ENCODE measurements at regions of chr17 and their contacts with region 1.

Region 1: GRCh38 chr17:8118769-8119580 is 661 bp upstream of the ALOXE3 start:
- DNase-seq: peak; percentile 90 to 95 (median 92)
- H3K4me3 ChIP-seq: peak overlapping the region; percentile 39 to 88 (median 75)
- H3K27ac ChIP-seq: peak overlapping the region; percentile 64 to 98 (median 92)
- H3K27me3 ChIP-seq: peaks cover 0 to 3% (median 0%) of the 10 kb centered on the region in 45 donors
- CTCF ChIP-seq: peak; percentile 78 to 98 (median 92)

Region 2: GRCh38 chr17:8057691-8058114 is 61.3 kb before region 1 on chr17:
- intact Hi-C with region 1: loop called in 1 of 2 experiments (anchors 5 kb)
- DNase-seq: peak in 7 of 10 donors; percentile 25 to 58 (median 48)
- H3K4me3 ChIP-seq: peak overlapping the region in 4 of 59 donors; percentile 1 to 35 (median 11)
- H3K27ac ChIP-seq: no peak overlapping the region
- H3K27me3 ChIP-seq: peaks cover 0 to 53% (median 34%) of the 10 kb centered on the region in 45 donors
- CTCF ChIP-seq: peak; percentile 56 to 93 (median 80)

Region 3: GRCh38 chr17:8156246-8156992 is 37.4 kb after region 1 on chr17:
- intact Hi-C with region 1: loop called (anchors 1 to 2 kb)
- DNase-seq: peak; percentile 98 to 100 (median 99)
- H3K4me3 ChIP-seq: peak overlapping the region; percentile 60 to 98 (median 87)
- H3K27ac ChIP-seq: peak overlapping the region; percentile 90 to 100 (median 100)
- H3K27me3 ChIP-seq: no peaks in the 10 kb centered on the region
- CTCF ChIP-seq: peak in 36 of 56 donors; percentile 9 to 56 (median 32)

Region 4: DNA sequence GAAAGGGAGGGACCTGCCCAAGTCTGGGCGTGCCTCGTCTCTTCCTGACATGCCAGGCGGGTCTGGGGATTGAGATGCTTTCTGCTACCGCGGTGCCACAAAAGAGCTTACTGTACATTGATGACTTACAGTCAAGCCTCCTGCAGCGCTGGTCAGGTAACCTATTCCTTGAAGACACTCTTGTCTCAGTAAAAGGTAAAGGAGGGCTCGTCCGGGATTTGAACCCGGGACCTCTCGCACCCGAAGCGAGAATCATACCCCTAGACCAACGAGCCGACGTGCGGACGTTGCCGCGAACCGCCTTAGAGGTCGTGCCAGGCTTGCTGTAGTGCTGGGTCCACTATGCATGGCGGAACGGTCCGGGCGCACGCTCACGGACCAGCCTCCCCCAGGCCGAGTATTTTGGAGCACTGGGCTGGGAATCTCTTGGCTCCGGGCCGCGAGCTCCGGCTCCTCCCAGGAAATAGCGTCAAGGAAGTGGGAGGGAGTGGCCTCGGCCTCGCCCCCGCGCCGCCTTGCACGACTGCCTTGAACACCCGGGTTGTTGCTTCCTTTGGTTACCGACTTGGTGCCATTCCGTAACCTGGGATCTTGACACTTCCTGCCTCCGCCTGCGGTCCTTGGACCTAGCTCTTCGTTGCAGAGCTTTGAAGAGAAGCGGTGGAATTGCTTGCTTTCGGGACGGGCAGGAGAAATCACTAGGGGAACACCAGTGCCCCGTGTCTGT is 103.8 kb after region 1 on chr17:
- intact Hi-C with region 1: loop called (anchors 1 to 5 kb)
- DNase-seq: peak; percentile 93 to 97 (median 94)
- H3K4me3 ChIP-seq: peak overlapping the region; percentile 52 to 99 (median 80)
- H3K27ac ChIP-seq: peak overlapping the region; percentile 95 to 100 (median 99)
- H3K27me3 ChIP-seq: no peaks in the 10 kb centered on the region
- CTCF ChIP-seq: peak in 11 of 56 donors; percentile 10 to 57 (median 32)

Region 5: DNA sequence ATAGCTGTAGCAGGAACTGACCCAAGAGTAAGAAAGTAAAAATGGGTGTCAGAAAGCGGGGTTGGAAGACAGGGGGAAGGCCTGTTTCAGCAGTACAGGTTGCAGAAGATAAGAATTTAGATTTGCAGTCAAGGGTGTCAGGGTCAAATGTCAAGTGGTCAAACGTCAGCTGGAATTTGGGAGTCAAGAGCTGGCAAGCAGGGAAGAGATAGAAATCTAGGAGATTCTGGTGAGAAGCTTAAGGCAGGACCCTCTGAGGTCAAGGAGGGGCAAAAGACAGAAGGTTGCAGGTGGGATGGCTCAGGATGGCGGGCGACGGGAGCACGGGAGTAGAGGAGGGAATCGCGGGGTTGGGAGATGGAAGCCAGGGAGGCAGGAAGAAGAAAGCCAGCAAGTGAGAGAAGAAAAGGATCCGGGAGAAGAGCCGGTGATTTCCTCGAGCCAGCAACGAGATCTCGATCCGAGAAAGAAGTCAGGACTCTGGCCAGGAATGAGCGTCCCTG is 175.9 kb after region 1 on chr17:
- intact Hi-C with region 1: loop called (anchors 5 to 10 kb)
- DNase-seq: no peak
- H3K4me3 ChIP-seq: peak overlapping the region; percentile 57 to 96 (median 80)
- H3K27ac ChIP-seq: peak overlapping the region; percentile 7 to 97 (median 87)
- H3K27me3 ChIP-seq: no peaks in the 10 kb centered on the region
- CTCF ChIP-seq: no peak

Measured in dorsolateral prefrontal cortex (tissue), 120 donors.